Psoas muscle (tissue), 8 donors: ENCODE measurements at regions of chr5 and their contacts with region 1.

Region 1: GRCh38 chr5:76867827-76868693 is 18.2 kb downstream of the S100Z start:
- DNase-seq: peak in 1 of 2 donors; percentile 34
- ATAC-seq: peak in 3 of 4 donors; percentile 37 to 58 (median 51)
- H3K4me3 ChIP-seq: no peak overlapping the region
- H3K27ac ChIP-seq: no peak overlapping the region
- H3K4me1 ChIP-seq: no peaks in the 10 kb centered on the region
- H3K27me3 ChIP-seq: no peaks in the 10 kb centered on the region
- CTCF ChIP-seq: peak; percentile 53

Region 2: GRCh38 chr5:77015938-77016569 is 148.0 kb after region 1 on chr5:
- intact Hi-C with region 1: loop called in 1 of 2 experiments (anchors 5 kb)
- DNase-seq: no peak
- ATAC-seq: no peak
- H3K4me3 ChIP-seq: no peak overlapping the region
- H3K27ac ChIP-seq: no peak overlapping the region
- H3K4me1 ChIP-seq: no peaks in the 10 kb centered on the region
- H3K27me3 ChIP-seq: peaks cover 0 to 9% (median 0%) of the 10 kb centered on the region in 3 donors
- CTCF ChIP-seq: no peak